B cell (primary cell): ENCODE measurements at regions of chr1 and their contacts with region 1.

Region 1: DNA sequence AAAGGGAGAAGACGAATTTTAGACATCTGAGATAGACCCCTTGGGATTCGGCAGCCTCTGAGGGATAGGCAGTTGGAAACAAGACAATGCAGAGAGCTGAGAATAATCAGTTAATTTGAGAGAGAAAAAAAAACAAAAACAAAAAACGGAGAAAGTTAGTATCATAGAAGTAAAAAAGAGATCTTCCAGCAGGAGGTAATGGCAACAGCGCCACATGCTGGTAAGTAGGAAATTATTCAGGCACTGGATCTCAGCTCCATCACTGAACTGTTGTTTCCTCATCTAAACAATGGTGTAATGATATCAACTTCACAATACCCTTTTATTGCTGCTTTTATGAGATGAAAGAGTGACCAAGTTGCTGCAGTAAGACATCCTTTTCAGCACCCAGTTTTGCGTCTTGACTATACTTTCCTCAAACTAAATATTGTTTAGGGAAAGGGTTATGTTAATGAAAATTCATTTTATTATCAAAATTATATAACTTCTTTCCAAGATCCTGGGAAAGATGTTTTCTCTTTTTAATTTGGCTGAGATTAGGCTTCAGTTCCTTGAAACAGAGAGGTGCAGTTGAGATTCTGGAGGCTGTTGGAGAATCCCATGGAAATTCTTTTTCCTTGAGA is 91.4 kb upstream of the KCNA3 start:
- DNase-seq: peak; percentile 77
- ATAC-seq: peak; percentile 73
- H3K4me3 ChIP-seq: no peak overlapping the region
- H3K4me3 Mint-ChIP-seq: no peak overlapping the region
- H3K27ac ChIP-seq: no peak overlapping the region
- H3K27ac Mint-ChIP-seq: no peak overlapping the region
- H3K4me1 ChIP-seq: peaks cover 0 to 3% of the 10 kb centered on the region in 2 donors
- H3K4me1 Mint-ChIP-seq: peaks cover 2% of the 10 kb centered on the region
- H3K27me3 ChIP-seq: peaks cover 0 to 8% (median 3%) of the 10 kb centered on the region in 4 experiments
- H3K27me3 Mint-ChIP-seq: peaks cover 17% of the 10 kb centered on the region
- CTCF ChIP-seq: peak; percentile 92

Region 2: DNA sequence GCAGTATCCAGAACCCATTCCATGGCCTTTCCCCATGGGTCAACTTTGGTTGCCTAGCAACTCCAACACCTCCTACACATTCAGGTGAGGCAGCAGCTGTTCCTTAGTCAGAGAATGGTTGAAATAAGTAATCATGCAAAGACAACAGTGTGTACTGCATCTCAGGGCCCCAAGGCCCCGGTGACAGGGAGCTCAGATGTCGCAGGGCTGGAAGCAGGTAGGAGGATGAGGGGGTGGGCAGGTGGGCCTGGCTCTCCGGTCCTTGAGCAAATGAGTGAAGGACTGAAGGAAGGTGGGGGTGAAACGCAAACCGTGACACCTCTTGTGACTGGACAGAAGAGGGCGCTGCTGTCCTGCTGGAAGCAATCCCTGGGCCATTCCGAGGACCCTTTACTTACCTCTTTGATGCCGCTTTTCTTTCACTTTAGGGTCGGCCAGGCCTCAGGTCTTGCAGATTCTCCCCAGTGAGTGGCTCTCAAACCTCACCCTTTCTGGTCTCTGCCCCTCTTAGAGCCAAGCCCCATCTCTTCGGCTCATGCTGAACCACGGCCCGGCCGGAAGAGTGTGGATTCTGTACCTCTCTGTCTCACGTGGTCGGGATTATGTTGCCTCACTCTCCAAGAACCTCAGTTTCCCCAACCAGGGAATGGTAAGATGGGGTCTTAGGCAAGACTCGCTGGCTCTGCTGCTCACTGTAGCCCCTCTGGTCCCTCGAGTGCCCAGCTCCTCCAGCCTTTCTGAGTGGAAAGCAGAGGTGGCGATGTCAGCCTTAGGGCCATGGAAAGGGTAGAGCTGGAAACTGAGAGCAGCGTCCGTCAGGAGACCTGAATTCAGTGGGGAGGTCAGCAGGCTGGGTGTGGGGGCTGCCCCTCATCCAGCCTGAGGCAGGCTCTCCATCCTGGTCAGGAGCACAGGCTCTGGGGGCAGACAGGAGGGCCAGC is 241.6 kb before region 1 on chr1:
- CTCF ChIA-PET with region 1: interaction called, 15 read pairs
- POLR2A ChIA-PET with region 1: no interaction called
- intact Hi-C with region 1: no loop called
- DNase-seq: peak; percentile 60
- ATAC-seq: peak; percentile 43
- H3K4me3 ChIP-seq: no peak overlapping the region
- H3K4me3 Mint-ChIP-seq: no peak overlapping the region
- H3K27ac ChIP-seq: no peak overlapping the region
- H3K27ac Mint-ChIP-seq: no peak overlapping the region
- H3K4me1 ChIP-seq: peaks cover 3 to 6% of the 10 kb centered on the region in 2 donors
- H3K4me1 Mint-ChIP-seq: peaks cover 3% of the 10 kb centered on the region
- H3K27me3 ChIP-seq: peaks cover 0 to 25% (median 5%) of the 10 kb centered on the region in 4 experiments
- H3K27me3 Mint-ChIP-seq: peaks cover 50% of the 10 kb centered on the region
- CTCF ChIP-seq: peak; percentile 68

Region 3: GRCh38 chr1:110605901-110606656 is 160.1 kb before region 1 on chr1 and contains the start of gene KCNA2:
- CTCF ChIA-PET with region 1: interaction called, 21 read pairs
- POLR2A ChIA-PET with region 1: no interaction called
- intact Hi-C with region 1: no loop called
- DNase-seq: no peak
- ATAC-seq: peak; percentile 23
- H3K4me3 ChIP-seq: peak within 1 kb of the TSS; percentile 8 to 71 (median 50)
- H3K4me3 Mint-ChIP-seq: peak within 1 kb of the TSS; percentile 88
- H3K27ac ChIP-seq: no peak within 1 kb of the TSS
- H3K27ac Mint-ChIP-seq: no peak within 1 kb of the TSS
- H3K4me1 ChIP-seq: peaks cover 23 to 28% of the 10 kb centered on the region in 2 donors
- H3K4me1 Mint-ChIP-seq: peaks cover 25% of the 10 kb centered on the region
- H3K27me3 ChIP-seq: peaks cover 0 to 59% (median 37%) of the 10 kb centered on the region in 4 experiments
- H3K27me3 Mint-ChIP-seq: peaks cover 62% of the 10 kb centered on the region
- CTCF ChIP-seq: no peak
- total RNA-seq, gene KCNA2: 0.29 and 0.59 TPM in 2 replicates

Region 4: DNA sequence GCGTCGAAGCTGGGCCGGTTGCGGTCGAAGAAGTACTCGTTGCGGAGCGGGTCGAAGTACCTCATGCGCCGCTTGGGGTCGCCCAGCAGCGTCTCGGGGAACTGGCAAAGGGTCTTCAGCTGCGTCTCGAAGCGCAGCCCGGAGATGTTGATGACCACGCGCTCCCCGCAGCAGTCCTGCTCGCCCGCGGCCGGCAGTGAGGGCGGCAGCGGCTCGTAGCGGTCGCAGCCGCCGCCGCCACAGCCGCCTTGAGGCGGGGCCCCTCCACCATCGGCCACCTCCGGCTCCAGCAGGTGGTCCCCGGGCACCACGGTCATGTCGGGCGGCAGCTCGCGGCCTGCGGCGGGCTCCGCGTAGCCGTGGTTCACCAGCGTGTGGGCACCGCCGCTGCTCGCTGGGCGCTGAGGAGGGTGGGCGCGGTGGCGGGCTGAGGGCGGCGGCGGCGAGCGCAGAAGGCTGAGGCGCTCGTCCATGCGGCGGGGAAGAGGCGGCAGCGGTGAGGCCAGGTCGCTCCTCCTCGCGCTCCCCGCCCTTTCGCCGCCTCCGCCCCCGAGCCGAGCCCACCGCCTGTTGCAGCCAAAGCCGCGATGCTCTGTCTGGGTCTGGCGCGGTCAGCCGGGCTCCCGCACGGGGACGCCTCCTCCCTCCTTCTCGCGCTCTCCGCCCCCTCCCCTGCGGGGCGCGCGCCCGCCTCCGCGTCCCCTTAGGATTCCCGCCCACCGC is 91.6 kb before region 1 on chr1 and contains the start of gene KCNA3:
- CTCF ChIA-PET with region 1: interaction called, 29 read pairs
- POLR2A ChIA-PET with region 1: no interaction called
- intact Hi-C with region 1: loop called (anchors 5 kb)
- DNase-seq: peak; percentile 79
- ATAC-seq: peak; percentile 59
- H3K4me3 ChIP-seq: peak within 1 kb of the TSS in 4 of 5 experiments; percentile 50 to 67 (median 62)
- H3K4me3 Mint-ChIP-seq: peak within 1 kb of the TSS; percentile 84
- H3K27ac ChIP-seq: peak within 1 kb of the TSS; percentile 68 to 76
- H3K27ac Mint-ChIP-seq: peak within 1 kb of the TSS; percentile 81
- H3K4me1 ChIP-seq: peaks cover 38 to 43% of the 10 kb centered on the region in 2 donors
- H3K4me1 Mint-ChIP-seq: peaks cover 54% of the 10 kb centered on the region
- H3K27me3 ChIP-seq: no peaks in the 10 kb centered on the region
- H3K27me3 Mint-ChIP-seq: no peaks in the 10 kb centered on the region
- CTCF ChIP-seq: peak; percentile 48
- total RNA-seq, gene KCNA3: 60.0 and 62.5 TPM in 2 replicates

Region 5: DNA sequence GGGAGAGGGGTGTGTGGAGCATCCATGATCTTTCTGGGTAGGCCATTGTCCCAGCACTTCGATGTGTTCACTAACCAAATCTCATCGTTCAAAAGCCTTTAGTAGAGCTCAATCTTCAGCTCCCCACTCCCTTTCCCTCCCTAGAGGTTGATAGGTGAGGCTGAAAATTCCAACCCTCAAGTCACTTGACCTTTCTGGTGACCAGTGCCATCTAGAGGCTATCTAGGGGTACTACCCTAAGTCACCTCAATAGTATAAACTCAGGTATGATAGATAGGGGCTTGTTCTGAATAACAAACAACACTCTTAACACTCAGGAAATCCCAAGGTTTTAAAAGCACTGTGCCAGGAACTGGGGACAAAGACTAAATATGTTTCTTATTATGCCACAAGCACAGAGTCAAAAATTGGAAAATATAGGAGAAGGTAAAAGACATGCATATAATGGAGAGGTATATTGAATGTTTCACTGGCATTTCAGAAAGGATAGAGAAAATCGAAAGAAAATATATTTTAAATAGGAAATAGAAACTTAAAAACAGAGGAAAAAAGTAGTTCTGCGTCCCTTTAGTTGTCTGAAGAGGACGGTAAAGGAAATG is 63.9 kb after region 1 on chr1:
- CTCF ChIA-PET with region 1: interaction called, 15 read pairs
- POLR2A ChIA-PET with region 1: no interaction called
- intact Hi-C with region 1: no loop called
- DNase-seq: peak; percentile 74
- ATAC-seq: peak; percentile 88
- H3K4me3 ChIP-seq: no peak overlapping the region
- H3K4me3 Mint-ChIP-seq: no peak overlapping the region
- H3K27ac ChIP-seq: no peak overlapping the region
- H3K27ac Mint-ChIP-seq: no peak overlapping the region
- H3K4me1 ChIP-seq: peaks cover 8 to 9% of the 10 kb centered on the region in 2 donors
- H3K4me1 Mint-ChIP-seq: peaks cover 30% of the 10 kb centered on the region
- H3K27me3 ChIP-seq: no peaks in the 10 kb centered on the region
- H3K27me3 Mint-ChIP-seq: no peaks in the 10 kb centered on the region
- CTCF ChIP-seq: peak; percentile 94